OCI-LY7 (cell line): ENCODE measurements at regions of chr2 and their contacts with region 1.

Region 1: GRCh38 chr2:16608661-16609643 is 56.7 kb downstream of the CYRIA start:
- DNase-seq: peak; percentile 83
- H3K4me3 ChIP-seq: peak overlapping the region; percentile 67
- H3K27ac ChIP-seq: peak overlapping the region; percentile 41
- H3K4me1 ChIP-seq: peaks cover 11% of the 10 kb centered on the region
- CTCF ChIP-seq: peak; percentile 84

Region 2: DNA sequence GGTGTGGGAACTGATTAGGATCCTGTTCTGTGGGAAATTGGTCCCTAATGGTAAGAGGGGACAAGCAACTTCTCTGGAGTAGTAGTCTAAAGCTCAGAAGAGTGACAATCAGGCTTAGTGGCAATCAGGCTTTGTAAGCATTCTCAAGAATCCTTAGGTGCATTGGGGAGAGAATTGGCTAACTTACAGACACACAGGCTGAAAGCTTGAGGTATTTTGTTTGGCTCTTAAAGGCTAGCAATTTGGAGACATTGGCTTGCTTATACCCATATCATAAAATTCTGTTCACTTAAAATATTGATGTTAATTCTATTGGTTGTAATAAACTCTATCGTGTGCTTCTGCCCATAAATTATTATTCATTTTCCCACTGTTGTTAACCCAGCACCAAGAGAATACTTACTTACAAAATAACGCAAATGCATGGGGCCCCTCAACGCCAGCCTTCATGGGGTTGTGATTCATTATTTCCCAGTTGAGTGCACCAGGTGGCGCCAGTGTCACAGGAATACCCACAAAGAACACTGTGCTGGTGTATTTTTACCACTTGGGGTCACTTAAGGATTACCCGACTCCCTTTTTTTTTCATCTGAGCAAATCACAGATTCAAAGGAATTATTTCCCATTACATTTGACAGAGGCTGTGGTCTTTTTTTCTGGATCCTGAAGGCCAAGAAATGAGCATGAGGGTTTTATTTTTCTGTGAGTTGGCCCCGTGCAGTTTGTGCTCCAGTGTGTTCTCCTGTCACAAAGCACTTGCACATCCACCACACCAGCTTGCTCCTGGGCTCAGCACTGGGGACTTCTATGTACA is 971.8 kb before region 1 on chr2:
- CTCF ChIA-PET with region 1: no interaction called
- POLR2A ChIA-PET with region 1: no interaction called
- intact Hi-C with region 1: loop called (anchors 1 kb)
- DNase-seq: peak; percentile 60
- H3K4me3 ChIP-seq: no peak overlapping the region
- H3K27ac ChIP-seq: no peak overlapping the region
- H3K4me1 ChIP-seq: no peaks in the 10 kb centered on the region
- CTCF ChIP-seq: peak; percentile 97

Region 3: DNA sequence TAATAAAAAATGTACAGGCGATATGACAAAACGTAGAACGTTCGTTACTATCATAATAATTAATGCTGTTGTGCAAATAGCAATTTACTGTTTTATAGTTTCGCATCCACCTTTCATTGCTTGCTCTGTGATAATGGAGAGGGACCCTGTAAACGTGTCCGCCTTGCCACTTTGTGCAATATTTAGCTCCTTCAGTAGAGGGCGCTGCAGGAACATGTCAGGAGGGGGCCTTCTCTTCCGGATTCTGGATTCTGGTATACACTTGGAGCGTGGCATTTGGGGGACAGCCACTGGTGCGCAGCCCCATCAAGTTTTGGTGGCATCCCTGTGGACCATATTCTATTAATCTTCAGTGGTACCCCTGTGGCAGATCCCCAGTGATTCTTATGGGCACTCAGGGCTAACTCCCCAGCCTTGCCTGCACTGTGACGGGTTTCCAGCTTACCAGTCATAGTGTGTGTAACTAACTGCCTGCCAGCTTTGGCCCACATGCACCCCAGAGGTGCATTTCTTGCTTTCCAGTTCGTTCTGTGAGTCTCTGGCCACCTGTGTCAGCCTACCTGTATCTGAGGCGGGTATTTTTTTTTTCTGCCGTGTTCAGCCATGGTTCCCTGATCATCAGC is 83.6 kb before region 1 on chr2:
- CTCF ChIA-PET with region 1: no interaction called
- POLR2A ChIA-PET with region 1: no interaction called
- intact Hi-C with region 1: loop called (anchors 1 kb)
- DNase-seq: peak; percentile 44
- H3K4me3 ChIP-seq: no peak overlapping the region
- H3K27ac ChIP-seq: no peak overlapping the region
- H3K4me1 ChIP-seq: no peaks in the 10 kb centered on the region
- CTCF ChIP-seq: peak; percentile 90

Region 4: DNA sequence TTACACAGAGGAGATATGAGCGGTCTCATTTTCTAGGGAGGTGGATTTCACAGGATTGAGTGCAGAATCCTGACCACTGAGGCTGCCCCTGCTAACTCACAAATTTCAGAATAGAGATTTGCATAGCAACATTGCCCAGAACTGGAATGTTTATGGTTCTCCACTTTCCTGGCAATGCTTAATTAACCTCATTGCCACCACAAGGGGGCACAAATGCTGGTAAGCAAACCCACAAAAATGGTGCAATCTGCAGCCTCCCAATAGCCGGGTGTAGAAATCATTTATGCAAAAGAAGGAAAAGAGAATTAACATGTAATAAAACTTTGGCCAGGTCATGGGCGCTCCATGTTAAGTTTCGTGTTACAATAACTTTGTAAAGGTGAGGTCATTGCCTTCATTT is 55.7 kb before region 1 on chr2:
- CTCF ChIA-PET with region 1: interaction called, 3 read pairs
- POLR2A ChIA-PET with region 1: interaction called, 4 read pairs
- intact Hi-C with region 1: loop called (anchors 1 kb)
- DNase-seq: peak; percentile 59
- H3K4me3 ChIP-seq: no peak overlapping the region
- H3K27ac ChIP-seq: no peak overlapping the region
- H3K4me1 ChIP-seq: no peaks in the 10 kb centered on the region
- CTCF ChIP-seq: peak; percentile 87

Region 5: GRCh38 chr2:16756831-16757644 is 148.1 kb after region 1 on chr2:
- CTCF ChIA-PET with region 1: interaction called, 17 read pairs
- POLR2A ChIA-PET with region 1: no interaction called
- intact Hi-C with region 1: loop called (anchors 1 kb)
- DNase-seq: peak; percentile 79
- H3K4me3 ChIP-seq: no peak overlapping the region
- H3K27ac ChIP-seq: no peak overlapping the region
- H3K4me1 ChIP-seq: peaks cover 4% of the 10 kb centered on the region
- CTCF ChIP-seq: peak; percentile 96